Activated T-helper 1 cell treated with anti-CD3 and anti-CD28 coated beads, Interleukin-12 subunit alpha, Interleukin-12 subunit beta, Interleukin-2, Interleukin-4 antibody, amounts not matched to agents 30 ng/mL and 10 ng/mL and 1 ng/mL, durations not matched to agents 14 hours and 24 hours and 36 hours (primary cell): ENCODE measurements at regions of chr11 and their contacts with region 1.

Region 1: GRCh38 chr11:76680518-76681425 is 10.2 kb upstream of the LRRC32 start:
- DNase-seq: peak; percentile 55
- H3K4me3 Mint-ChIP-seq: no peak overlapping the region
- H3K27ac Mint-ChIP-seq: no peak overlapping the region
- H3K4me1 Mint-ChIP-seq: peaks cover 37% of the 10 kb centered on the region
- H3K27me3 Mint-ChIP-seq: peaks cover 22% of the 10 kb centered on the region

Region 2: GRCh38 chr11:76551400-76551799 is 129.4 kb before region 1 on chr11:
- intact Hi-C with region 1: loop called (anchors 1 kb)
- DNase-seq: no peak
- H3K4me3 Mint-ChIP-seq: no peak overlapping the region
- H3K27ac Mint-ChIP-seq: no peak overlapping the region
- H3K4me1 Mint-ChIP-seq: peaks cover 7% of the 10 kb centered on the region
- H3K27me3 Mint-ChIP-seq: no peaks in the 10 kb centered on the region

Region 3: GRCh38 chr11:76598426-76598839 is 82.3 kb before region 1 on chr11:
- intact Hi-C with region 1: loop called (anchors 1 kb)
- DNase-seq: no peak
- H3K4me3 Mint-ChIP-seq: no peak overlapping the region
- H3K27ac Mint-ChIP-seq: no peak overlapping the region
- H3K4me1 Mint-ChIP-seq: peaks cover 30% of the 10 kb centered on the region
- H3K27me3 Mint-ChIP-seq: peaks cover 2% of the 10 kb centered on the region

Region 4: GRCh38 chr11:77677138-77677537 is 996.4 kb after region 1 on chr11:
- intact Hi-C with region 1: no loop called
- DNase-seq: no peak
- H3K4me3 Mint-ChIP-seq: no peak overlapping the region
- H3K27ac Mint-ChIP-seq: no peak overlapping the region
- H3K4me1 Mint-ChIP-seq: no peaks in the 10 kb centered on the region
- H3K27me3 Mint-ChIP-seq: no peaks in the 10 kb centered on the region